Heart right ventricle (tissue), 16 donors: ENCODE measurements at regions of chr2 and their contacts with region 1.

Region 1: DNA sequence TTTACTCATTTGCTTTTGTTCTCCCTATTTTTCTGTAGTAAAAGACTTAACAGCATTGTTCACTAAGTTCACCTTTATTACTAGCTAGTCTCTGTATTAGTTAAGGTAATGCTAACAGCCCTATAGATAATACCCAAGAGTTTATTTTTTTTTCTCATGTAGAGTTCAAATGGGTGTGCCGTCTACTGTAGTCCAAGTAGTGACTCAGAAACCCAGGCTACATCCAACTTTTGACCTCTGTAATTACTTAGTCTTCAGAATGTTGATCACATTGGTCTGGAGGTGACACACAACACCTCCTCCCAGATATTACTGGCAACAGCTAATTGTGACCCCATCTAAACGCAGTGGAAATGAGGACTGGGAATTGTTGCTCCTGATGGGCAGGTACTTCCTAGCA is 7.7 kb downstream of the COQ10B start:
- DNase-seq: no peak
- ATAC-seq: peak in 4 of 8 donors; percentile 20 to 76 (median 36)
- H3K4me3 ChIP-seq: no peak overlapping the region
- H3K27ac ChIP-seq: no peak overlapping the region
- H3K4me1 ChIP-seq: peaks cover 3 to 43% (median 12%) of the 10 kb centered on the region in 9 donors
- H3K27me3 ChIP-seq: no peaks in the 10 kb centered on the region
- CTCF ChIP-seq: no peak

Region 2: DNA sequence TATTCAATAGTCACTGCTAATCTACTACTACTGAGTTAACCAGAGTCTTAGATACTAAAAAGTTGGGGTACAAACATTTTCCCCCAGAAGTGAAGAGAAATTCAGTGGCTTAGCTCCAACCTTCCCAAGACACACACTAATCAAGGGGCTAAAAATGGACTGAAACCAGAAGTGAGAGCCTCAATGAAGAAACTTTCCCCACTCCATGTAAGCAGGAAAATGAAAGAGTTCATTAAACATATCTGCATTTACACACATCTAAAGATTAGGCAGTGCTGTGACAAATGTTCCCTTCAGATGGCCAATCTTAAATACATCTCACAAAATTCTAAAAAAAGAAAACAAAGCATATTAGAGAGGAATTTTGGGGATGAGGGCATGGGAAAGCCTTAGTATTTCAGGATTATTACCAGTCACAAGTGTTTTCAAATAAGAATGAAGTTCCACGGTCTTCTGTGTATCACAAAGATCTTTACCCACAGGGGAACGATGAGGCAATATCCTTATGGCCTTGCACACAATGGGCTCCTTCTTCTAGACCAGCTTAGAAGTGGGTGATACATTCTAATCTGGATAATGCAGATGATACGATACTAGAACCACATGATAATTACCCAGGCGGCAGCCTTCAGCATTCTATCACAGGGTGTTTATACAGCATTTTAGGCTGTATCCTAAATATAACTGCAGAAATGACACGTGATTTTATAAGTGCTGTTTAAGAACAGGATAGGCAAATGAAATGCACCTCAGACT is 167.6 kb before region 1 on chr2:
- intact Hi-C with region 1: no loop called
- DNase-seq: no peak
- ATAC-seq: peak; percentile 17 to 88 (median 58)
- H3K4me3 ChIP-seq: peak overlapping the region in 2 of 10 donors; percentile 4 to 5
- H3K27ac ChIP-seq: peak overlapping the region in 7 of 10 donors; percentile 13 to 77 (median 34)
- H3K4me1 ChIP-seq: peaks cover 0 to 71% (median 22%) of the 10 kb centered on the region in 9 donors
- H3K27me3 ChIP-seq: no peaks in the 10 kb centered on the region
- CTCF ChIP-seq: no peak

Region 3: DNA sequence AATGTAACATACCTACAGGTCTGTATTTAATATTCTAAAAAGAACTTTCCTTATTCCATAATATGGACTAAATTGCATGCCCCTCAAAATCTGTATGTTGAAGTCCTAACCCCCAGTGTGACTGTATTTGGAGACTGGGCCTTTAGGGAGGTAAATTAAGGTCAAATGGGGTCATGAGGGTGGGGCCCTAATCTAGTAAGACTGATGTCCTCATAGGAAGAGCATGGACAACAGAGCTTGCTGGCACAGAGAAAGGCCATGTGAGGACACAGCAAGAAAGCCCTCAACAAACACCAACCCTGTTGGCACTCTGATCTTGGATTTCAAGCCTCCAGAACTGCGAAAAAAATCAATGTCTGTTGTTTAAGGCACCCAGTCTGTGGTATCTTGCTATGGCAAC is 44.8 kb before region 1 on chr2:
- intact Hi-C with region 1: loop called in 1 of 10 experiments (anchors 10 kb)
- DNase-seq: no peak
- ATAC-seq: no peak
- H3K4me3 ChIP-seq: no peak overlapping the region
- H3K27ac ChIP-seq: no peak overlapping the region
- H3K4me1 ChIP-seq: peaks cover 0 to 27% (median 4%) of the 10 kb centered on the region in 9 donors
- H3K27me3 ChIP-seq: no peaks in the 10 kb centered on the region
- CTCF ChIP-seq: no peak

Region 4: DNA sequence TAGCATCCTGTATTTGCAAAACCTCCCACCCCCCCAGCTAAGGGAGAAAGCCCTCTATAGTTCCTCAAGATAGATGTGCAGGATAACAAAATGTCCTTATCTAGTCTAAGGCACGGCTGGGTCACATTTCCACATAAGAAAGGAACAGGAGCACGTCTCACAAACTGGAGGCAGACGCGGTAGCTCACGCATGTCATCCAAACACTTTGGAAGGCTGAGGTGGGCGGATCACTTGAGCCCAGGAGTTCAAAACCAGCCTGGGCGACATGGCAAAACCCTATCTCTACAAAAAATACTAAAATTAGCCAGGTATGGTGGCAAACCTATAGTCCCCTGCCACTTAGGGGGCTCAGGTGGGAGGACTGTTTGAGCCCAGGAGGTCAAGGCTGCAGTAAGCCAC is 35.5 kb before region 1 on chr2:
- intact Hi-C with region 1: loop called in 1 of 10 experiments (anchors 5 kb)
- DNase-seq: no peak
- ATAC-seq: peak in 1 of 8 donors; percentile 22
- H3K4me3 ChIP-seq: no peak overlapping the region
- H3K27ac ChIP-seq: peak overlapping the region in 1 of 10 donors; percentile 7
- H3K4me1 ChIP-seq: peaks cover 3 to 97% (median 65%) of the 10 kb centered on the region in 9 donors
- H3K27me3 ChIP-seq: no peaks in the 10 kb centered on the region
- CTCF ChIP-seq: no peak

Region 5: GRCh38 chr2:197760293-197760657 is 299.2 kb after region 1 on chr2:
- intact Hi-C with region 1: no loop called
- DNase-seq: peak in 1 of 2 donors; percentile 12
- ATAC-seq: peak in 5 of 8 donors; percentile 53 to 77 (median 56)
- H3K4me3 ChIP-seq: no peak overlapping the region
- H3K27ac ChIP-seq: no peak overlapping the region
- H3K4me1 ChIP-seq: no peaks in the 10 kb centered on the region
- H3K27me3 ChIP-seq: no peaks in the 10 kb centered on the region
- CTCF ChIP-seq: no peak

Region 6: DNA sequence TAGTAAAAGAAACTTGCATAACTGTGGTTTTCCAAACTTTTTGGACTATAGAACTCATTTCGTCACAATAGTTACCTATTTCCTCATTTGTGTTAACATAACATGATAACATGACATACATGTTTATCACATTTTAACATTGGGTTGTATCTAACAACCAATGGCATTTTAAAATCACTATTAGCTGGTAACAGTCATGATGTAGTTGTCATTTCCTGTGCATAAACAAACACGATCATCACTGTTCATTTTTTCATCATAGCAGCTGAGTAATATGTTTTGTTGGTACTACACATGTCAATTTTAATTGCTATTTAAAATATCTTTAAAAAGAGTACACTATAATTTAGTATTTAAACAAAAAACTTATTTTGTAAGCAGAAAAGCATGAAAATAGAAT is 1594.3 kb after region 1 on chr2:
- intact Hi-C with region 1: no loop called
- DNase-seq: no peak
- ATAC-seq: no peak
- H3K4me3 ChIP-seq: no peak overlapping the region
- H3K27ac ChIP-seq: no peak overlapping the region
- H3K4me1 ChIP-seq: no peaks in the 10 kb centered on the region
- H3K27me3 ChIP-seq: no peaks in the 10 kb centered on the region
- CTCF ChIP-seq: no peak